Posterior cingulate gyrus (tissue), 11 donors: ENCODE measurements at regions of chr12 and their contacts with region 1.

Region 1: GRCh38 chr12:116551952-116552772 is 7.0 kb upstream of the MAP1LC3B2 start:
- DNase-seq: peak in 8 of 10 donors; percentile 28 to 91 (median 56)

Region 2: GRCh38 chr12:116659771-116660481 is 107.8 kb after region 1 on chr12:
- intact Hi-C with region 1: loop called (anchors 5 kb)
- DNase-seq: no peak